GM18951 (cell line): ENCODE measurements at regions of chr13 and their contacts with region 1.

Region 1: DNA sequence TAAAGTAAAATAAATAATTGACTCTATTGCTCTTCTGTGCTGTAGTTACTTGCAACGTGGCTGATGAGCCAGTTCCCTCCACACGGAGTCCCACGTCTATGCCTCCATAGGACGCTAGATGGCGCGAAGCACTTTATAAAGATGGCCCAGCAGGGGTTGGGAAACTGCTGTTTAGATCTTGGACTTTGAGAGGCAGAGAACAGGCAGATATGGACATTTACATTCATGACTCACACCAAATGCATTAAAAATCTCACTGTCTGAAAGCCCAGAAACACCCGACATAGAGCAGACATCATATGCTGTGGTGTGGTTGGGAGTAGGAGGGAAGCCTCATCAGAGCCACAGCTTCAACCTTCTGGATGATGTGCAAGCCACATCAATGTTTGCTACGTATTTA is 643.1 kb upstream of the ARGLU1 start:
- POLR2A ChIP-seq: no peak

Region 2: DNA sequence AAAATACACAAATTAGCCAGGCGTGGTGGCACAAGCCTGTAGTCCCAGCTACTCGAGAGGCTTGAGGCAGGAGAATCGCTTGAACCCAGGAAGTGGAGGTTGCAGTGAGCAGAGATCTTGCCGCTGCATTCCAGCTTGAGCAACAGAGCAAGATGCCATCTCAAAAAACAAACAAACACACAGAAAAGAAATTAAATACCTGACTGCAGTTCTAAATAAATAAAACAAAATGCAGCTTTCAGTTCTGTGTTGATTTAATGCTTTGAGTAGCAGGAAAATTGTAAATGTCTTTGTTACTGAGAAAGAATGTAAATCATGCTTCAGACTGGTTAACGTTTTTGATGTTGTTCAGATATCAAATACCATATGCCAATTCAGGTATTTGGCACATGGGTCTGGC is 44.8 kb before region 1 on chr13:
- in situ Hi-C with region 1: no loop called
- POLR2A ChIP-seq: no peak

Region 3: GRCh38 chr13:107475753-107476453 is 264.8 kb after region 1 on chr13:
- in situ Hi-C with region 1: no loop called
- POLR2A ChIP-seq: no peak

Region 4: GRCh38 chr13:107650081-107650701 is 439.1 kb after region 1 on chr13:
- in situ Hi-C with region 1: loop called (anchors 25 kb)
- POLR2A ChIP-seq: no peak

Region 5: GRCh38 chr13:107680115-107680514 is 469.0 kb after region 1 on chr13:
- in situ Hi-C with region 1: no loop called
- POLR2A ChIP-seq: no peak

Region 6: GRCh38 chr13:108155185-108156106 is 944.4 kb after region 1 on chr13:
- in situ Hi-C with region 1: loop called (anchors 25 kb)
- POLR2A ChIP-seq: no peak